ENCODE measurements at regions of chr4 and their contacts with region 1.

Region 1: DNA sequence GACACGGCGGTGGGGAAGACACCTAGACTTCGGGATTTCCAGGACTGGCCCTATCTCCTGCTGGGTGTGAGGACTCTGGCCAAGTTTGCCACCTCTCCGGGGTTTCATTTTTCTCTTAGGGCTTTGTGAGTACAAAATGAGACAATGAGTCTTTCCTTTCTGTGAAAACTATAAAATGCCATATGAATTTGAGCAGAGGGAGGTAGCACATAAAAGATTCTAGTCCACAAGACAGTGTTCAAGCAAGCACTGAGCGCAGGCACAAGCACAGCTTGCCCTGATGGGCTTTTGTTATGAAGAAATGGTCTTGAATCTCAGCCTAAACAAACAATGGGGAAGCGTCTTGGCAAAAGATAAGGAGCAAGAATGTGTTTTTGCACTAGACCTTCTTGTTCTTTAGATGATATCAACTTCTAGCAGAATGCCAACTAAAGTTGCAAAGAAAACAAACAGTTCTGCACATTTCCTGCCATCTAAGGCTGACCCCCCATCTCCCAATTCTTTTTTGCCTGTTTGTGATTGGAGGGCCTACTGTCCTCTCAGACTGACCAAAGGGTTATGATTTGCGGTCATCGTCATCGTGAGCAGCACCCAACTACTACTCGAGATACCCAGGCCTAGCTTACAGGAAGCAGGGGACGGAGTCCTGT is 73.0 kb upstream of the ZNF518B start:
- DNase-seq: no peak
- ATAC-seq: no peak
- H3K4me3 ChIP-seq: no peak overlapping the region
- H3K4me3 Mint-ChIP-seq: no peak overlapping the region
- H3K27ac ChIP-seq: no peak overlapping the region
- H3K27ac Mint-ChIP-seq: no peak overlapping the region
- H3K4me1 ChIP-seq: no peaks in the 10 kb centered on the region
- H3K4me1 Mint-ChIP-seq: no peaks in the 10 kb centered on the region
- H3K27me3 ChIP-seq: peaks cover 0 to 2% of the 10 kb centered on the region in 2 experiments
- H3K27me3 Mint-ChIP-seq: peaks cover 5% of the 10 kb centered on the region
- CTCF ChIP-seq: no peak

Region 2: DNA sequence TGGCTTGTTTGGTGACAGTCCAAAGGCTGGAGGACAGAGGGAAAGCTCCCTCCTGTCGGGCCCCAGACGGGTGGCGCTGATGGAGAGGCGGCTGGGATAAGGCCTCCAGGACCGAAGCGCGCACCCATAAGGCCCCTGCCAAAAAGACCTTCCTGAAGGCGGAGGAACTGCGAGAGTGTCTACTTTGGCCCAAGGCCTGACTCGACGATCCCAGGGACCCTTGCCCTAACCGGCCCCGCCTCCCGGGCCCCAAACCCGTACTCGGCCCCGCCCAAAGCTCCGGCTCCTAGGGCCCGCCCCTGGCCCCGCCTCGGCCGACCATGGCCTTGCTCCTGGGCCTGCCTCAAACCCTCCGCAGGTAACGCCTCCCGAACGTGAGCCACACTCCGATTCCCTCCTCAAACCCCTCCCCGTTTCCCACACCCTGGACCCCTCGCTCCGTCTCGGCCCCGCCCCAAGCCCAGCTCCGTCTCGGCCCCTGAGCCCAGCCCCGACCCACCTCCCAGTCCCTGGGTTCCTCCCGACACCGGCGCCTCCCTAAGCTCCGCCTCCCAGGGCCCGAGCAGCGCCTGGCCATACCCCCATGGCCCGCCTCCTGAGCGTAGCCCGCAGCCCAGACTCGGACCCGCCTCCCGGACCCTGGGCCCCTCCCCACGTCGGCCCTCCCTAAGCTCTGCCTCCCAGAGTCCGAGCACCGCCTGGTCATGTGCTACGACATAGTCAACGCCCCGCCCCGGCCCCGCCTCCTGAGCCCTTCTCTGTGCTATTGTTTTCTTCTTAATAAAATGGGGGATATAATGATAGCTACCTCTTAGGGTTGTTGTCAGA is 838.8 kb before region 1 on chr4:
- CTCF ChIA-PET with region 1: no interaction called
- POLR2A ChIA-PET with region 1: no interaction called
- intact Hi-C with region 1: loop called (anchors 5 to 10 kb)
- DNase-seq: peak; percentile 77 to 97 (median 88)
- ATAC-seq: peak; percentile 99
- H3K4me3 ChIP-seq: peak overlapping the region; percentile 72
- H3K4me3 Mint-ChIP-seq: peak overlapping the region; percentile 92
- H3K27ac ChIP-seq: peak overlapping the region; percentile 67 to 73
- H3K27ac Mint-ChIP-seq: peak overlapping the region; percentile 85
- H3K4me1 ChIP-seq: peaks cover 8% of the 10 kb centered on the region
- H3K4me1 Mint-ChIP-seq: peaks cover 26% of the 10 kb centered on the region
- H3K27me3 ChIP-seq: no peaks in the 10 kb centered on the region
- H3K27me3 Mint-ChIP-seq: no peaks in the 10 kb centered on the region
- CTCF ChIP-seq: no peak

Region 3: GRCh38 chr4:10413177-10413576 is 117.1 kb before region 1 on chr4:
- CTCF ChIA-PET with region 1: no interaction called
- POLR2A ChIA-PET with region 1: no interaction called
- intact Hi-C with region 1: no loop called
- DNase-seq: no peak
- ATAC-seq: no peak
- H3K4me3 ChIP-seq: no peak overlapping the region
- H3K4me3 Mint-ChIP-seq: no peak overlapping the region
- H3K27ac ChIP-seq: no peak overlapping the region
- H3K27ac Mint-ChIP-seq: no peak overlapping the region
- H3K4me1 ChIP-seq: peaks cover 5% of the 10 kb centered on the region
- H3K4me1 Mint-ChIP-seq: peaks cover 10% of the 10 kb centered on the region
- H3K27me3 ChIP-seq: no peaks in the 10 kb centered on the region
- H3K27me3 Mint-ChIP-seq: no peaks in the 10 kb centered on the region
- CTCF ChIP-seq: no peak

Measured in CD4-positive, alpha-beta T cell (primary cell).